ENCODE measurements at regions of chr10 and their contacts with region 1.

Region 1: DNA sequence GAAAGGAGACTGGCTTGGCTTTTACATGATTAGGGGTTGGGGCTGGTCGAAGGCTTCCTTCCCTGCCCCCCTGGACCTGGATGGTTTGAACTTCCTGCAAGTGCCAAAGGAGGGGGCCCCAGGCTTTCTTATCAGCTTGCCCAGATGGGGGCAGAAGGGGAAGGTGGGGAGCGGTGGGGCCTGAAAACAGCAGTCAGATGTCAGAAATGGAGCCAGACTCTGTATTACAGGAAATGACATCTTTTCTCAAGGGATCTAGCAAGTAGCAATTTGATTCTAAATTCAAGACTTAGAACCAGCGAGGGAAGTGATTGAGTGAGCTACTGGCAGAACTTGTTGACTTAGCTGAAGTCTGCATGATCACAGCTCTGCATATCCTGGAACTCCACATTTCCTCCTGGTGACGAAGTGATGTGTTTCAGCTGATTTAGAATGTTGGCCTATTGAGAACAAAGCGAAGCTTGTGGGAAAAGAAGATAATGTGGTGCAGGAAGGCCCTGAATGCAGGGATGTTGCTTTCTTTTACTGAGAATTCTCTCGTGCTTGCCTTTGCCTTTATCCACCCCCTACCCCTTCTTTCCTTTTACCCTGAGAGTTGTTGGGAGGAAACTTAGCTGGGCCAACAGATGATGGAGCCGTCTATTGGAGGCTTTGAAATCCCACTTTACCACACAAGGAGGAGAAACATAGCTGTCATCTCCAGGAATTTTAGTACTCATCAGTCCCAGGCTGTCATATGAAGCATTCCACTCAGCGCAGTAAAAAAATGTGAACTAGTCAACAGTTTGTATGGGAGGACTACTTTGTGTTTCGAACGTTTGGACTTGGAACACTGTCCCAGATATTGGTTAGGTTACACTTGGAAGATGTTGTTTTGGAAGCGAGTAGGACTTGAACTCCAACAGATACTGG is 43.2 kb downstream of the CCNY start:
- DNase-seq: peak; percentile 59
- H3K4me3 Mint-ChIP-seq: peak overlapping the region; percentile 59
- H3K27ac Mint-ChIP-seq: peak overlapping the region; percentile 84
- H3K4me1 Mint-ChIP-seq: peaks cover 69% of the 10 kb centered on the region
- H3K27me3 Mint-ChIP-seq: no peaks in the 10 kb centered on the region

Region 2: DNA sequence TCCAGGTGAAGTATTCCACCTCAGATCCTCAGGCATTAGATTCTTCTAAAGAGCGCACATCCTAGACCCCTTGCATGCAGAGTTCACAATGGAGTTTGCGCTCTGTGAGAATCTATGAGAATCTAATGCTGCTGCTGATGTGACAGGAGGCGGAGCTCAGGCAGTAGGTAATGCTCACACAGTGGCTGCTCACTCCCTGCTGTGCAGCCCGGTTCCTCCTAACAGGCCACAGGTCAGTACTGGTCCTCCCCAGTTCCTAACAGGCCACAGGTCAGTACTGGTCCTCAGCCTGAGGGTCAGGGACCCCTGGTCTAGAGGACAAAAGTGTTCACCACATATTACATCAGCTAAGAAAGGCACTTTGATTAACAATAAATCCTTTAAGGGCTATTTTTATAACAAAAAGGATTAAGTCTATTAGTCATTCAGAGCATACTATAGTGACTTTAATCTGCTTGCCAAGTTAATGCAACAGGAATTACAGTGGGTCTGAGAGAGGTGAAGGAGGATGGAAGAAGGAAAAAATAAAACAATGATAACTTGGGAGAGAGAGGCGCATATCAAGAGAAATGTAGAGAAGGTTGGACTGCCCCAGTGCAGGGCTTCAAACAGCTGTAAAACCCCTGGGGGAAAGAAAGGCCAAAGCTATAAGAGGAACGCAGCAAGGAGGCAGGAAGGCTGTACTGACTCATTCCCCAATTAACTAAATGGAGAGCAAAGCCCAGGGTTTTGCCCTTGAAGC is 338.6 kb before region 1 on chr10:
- CTCF ChIA-PET with region 1: no interaction called
- intact Hi-C with region 1: no loop called
- DNase-seq: no peak
- H3K4me3 Mint-ChIP-seq: no peak overlapping the region
- H3K27ac Mint-ChIP-seq: peak overlapping the region; percentile 2
- H3K4me1 Mint-ChIP-seq: no peaks in the 10 kb centered on the region
- H3K27me3 Mint-ChIP-seq: no peaks in the 10 kb centered on the region

Region 3: GRCh38 chr10:35341521-35341920 is 38.0 kb before region 1 on chr10:
- CTCF ChIA-PET with region 1: interaction called, 3 read pairs
- intact Hi-C with region 1: loop called (anchors 1 kb)
- DNase-seq: no peak
- H3K4me3 Mint-ChIP-seq: no peak overlapping the region
- H3K27ac Mint-ChIP-seq: peak overlapping the region; percentile 11
- H3K4me1 Mint-ChIP-seq: peaks cover 74% of the 10 kb centered on the region
- H3K27me3 Mint-ChIP-seq: no peaks in the 10 kb centered on the region

Region 4: GRCh38 chr10:35442028-35442427 is 62.5 kb after region 1 on chr10:
- CTCF ChIA-PET with region 1: interaction called, 3 read pairs
- intact Hi-C with region 1: loop called (anchors 1 kb)
- DNase-seq: peak; percentile 36
- H3K4me3 Mint-ChIP-seq: no peak overlapping the region
- H3K27ac Mint-ChIP-seq: peak overlapping the region; percentile 78
- H3K4me1 Mint-ChIP-seq: peaks cover 47% of the 10 kb centered on the region
- H3K27me3 Mint-ChIP-seq: no peaks in the 10 kb centered on the region

Region 5: GRCh38 chr10:35563261-35563891 is 183.9 kb after region 1 on chr10:
- CTCF ChIA-PET with region 1: interaction called, 4 read pairs
- intact Hi-C with region 1: loop called (anchors 2 kb)
- DNase-seq: peak; percentile 61
- H3K4me3 Mint-ChIP-seq: no peak overlapping the region
- H3K27ac Mint-ChIP-seq: no peak overlapping the region
- H3K4me1 Mint-ChIP-seq: peaks cover 2% of the 10 kb centered on the region
- H3K27me3 Mint-ChIP-seq: no peaks in the 10 kb centered on the region

Region 6: GRCh38 chr10:35585903-35586535 is 206.5 kb after region 1 on chr10:
- CTCF ChIA-PET with region 1: no interaction called
- intact Hi-C with region 1: no loop called
- DNase-seq: no peak
- H3K4me3 Mint-ChIP-seq: no peak overlapping the region
- H3K27ac Mint-ChIP-seq: no peak overlapping the region
- H3K4me1 Mint-ChIP-seq: peaks cover 4% of the 10 kb centered on the region
- H3K27me3 Mint-ChIP-seq: peaks cover 4% of the 10 kb centered on the region

Measured in activated naive CD4-positive, alpha-beta T cell treated with anti-CD3 and anti-CD28 coated beads for 36 hours (primary cell).